ENCODE measurements at regions of chr10 and their contacts with region 1.

Region 1: DNA sequence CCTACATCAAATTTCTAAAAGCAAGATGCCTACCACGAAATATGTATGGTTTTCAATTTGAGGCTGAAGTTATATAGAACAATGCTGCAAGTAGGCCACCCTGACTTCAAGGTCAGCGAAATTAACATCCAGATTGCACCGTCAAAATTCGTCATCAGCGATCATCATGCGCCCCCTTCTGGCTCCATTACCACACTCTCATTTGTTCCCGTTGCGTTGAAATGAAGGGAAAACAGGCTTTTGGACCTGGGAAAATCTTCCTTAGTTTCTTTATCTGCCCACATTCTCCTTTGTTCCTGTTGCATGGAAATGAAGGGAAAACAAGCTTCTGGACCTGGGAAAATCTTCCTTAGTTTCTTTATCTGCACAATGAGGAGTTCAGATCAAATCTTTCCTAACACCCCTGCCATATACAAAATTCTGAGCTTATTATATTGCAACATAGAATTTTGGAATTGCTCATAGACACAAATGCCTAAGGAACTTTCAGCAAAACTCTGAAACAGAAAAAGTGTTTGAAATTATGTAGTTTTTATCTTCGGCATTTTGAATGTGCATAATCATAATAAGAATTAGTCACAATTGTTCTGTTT is 98.2 kb upstream of the PRKCQ start:
- DNase-seq: peak; percentile 76
- ATAC-seq: peak; percentile 68
- H3K4me3 Mint-ChIP-seq: no peak overlapping the region
- H3K27ac Mint-ChIP-seq: no peak overlapping the region
- H3K4me1 Mint-ChIP-seq: peaks cover 10% of the 10 kb centered on the region
- H3K27me3 Mint-ChIP-seq: peaks cover 52% of the 10 kb centered on the region

Region 2: DNA sequence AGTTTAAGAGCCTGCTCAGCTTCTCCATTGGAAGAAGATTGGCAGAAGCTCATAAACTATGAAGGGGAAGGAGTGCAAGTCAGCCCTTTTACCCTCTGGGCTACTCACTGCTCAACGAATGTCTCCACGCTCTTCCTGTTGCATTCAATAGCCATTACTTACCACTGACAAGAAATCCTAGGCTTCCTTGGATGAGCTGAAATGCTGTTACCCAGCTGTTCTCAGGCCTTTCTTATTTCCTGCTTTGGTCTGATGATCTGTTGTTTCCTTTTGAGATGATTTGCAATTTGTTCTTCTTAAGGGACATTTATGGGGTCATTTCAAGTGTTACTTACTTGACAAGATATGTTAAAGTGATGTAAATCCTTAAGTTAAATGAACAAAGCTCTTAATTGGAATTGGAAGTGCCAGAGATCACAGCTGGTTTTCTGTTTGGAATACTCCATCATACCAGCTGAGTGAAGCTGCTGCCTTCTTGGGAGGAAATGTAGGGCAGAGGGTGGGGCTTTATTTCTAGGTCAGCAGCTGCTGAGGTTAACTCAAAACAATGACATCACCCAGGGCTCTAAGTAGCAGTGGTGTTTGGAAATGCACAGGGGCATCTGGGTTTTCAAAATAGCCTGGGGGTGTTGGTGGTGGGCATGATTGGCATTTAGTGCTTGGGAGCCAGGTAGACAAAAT is 268.2 kb before region 1 on chr10:
- CTCF ChIA-PET with region 1: interaction called, 18 read pairs
- POLR2A ChIA-PET with region 1: no interaction called
- DNase-seq: peak; percentile 73
- ATAC-seq: peak; percentile 90
- H3K4me3 Mint-ChIP-seq: peak overlapping the region; percentile 63
- H3K27ac Mint-ChIP-seq: peak overlapping the region; percentile 83
- H3K4me1 Mint-ChIP-seq: peaks cover 45% of the 10 kb centered on the region
- H3K27me3 Mint-ChIP-seq: no peaks in the 10 kb centered on the region

Region 3: DNA sequence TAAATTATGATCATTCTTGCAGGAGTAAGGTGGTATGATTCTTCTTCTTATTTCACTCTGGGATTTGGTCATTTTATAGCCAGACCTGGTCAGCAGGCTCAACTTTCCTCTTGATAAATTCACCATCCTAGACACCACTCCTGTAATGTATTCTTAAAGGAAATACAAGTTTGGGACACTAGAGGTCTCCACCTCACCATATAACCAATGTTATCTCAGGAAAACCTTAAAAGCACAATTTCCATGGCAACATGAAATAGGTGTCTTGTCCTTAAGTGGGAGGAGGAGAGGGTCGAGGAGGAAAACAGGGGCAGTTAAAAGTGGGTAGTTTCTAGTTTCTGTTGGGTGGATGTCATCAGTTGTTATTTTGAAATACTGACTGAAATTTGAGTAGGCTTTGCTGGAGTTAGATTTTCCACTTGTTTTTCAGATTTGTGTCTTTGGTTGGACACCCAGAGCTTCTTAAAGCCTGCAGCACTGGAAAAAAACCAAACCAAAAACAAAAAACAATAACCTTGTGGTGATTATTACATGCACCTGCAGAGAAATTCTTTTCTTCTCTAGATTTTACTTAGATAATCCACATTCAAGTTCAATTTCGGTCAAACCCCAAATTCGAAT is 261.3 kb before region 1 on chr10:
- CTCF ChIA-PET with region 1: interaction called, 13 read pairs
- POLR2A ChIA-PET with region 1: interaction called, 3 read pairs
- DNase-seq: no peak
- ATAC-seq: peak; percentile 71
- H3K4me3 Mint-ChIP-seq: no peak overlapping the region
- H3K27ac Mint-ChIP-seq: no peak overlapping the region
- H3K4me1 Mint-ChIP-seq: peaks cover 6% of the 10 kb centered on the region
- H3K27me3 Mint-ChIP-seq: no peaks in the 10 kb centered on the region

Region 4: GRCh38 chr10:7184660-7185366 is 506.5 kb after region 1 on chr10:
- CTCF ChIA-PET with region 1: no interaction called
- POLR2A ChIA-PET with region 1: no interaction called
- DNase-seq: no peak
- ATAC-seq: no peak
- H3K4me3 Mint-ChIP-seq: no peak overlapping the region
- H3K27ac Mint-ChIP-seq: peak overlapping the region; percentile 13
- H3K4me1 Mint-ChIP-seq: peaks cover 29% of the 10 kb centered on the region
- H3K27me3 Mint-ChIP-seq: no peaks in the 10 kb centered on the region

Measured in activated CD8-positive, alpha-beta T cell treated with anti-CD3 and anti-CD28 coated beads, Interleukin-2, amount 10 ng/mL, durations not matched to agents 7 days and 5 days (primary cell).